ENCODE measurements at regions of chr14 and their contacts with region 1.

Region 1: DNA sequence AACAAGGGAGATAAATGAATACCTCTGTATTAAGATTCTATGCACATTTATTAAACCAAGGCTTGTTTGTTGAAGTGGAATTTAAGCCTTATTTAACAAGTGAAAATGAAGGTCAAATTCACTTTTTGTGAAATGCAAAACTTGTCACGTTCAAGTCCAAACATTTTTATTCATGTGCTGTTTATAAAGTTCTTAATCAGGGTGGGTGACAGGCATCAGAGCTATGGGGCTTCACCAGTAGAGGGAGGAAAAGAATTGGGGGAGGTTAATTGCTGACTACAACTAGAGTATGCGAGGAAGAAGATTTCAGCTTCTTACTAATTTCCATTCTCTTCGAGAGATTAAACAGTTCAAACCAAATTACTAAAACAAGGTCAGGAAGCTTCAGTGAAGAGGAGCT is 9.7 kb downstream of the MOK start:
- DNase-seq: no peak
- H3K4me3 ChIP-seq: no peak overlapping the region
- H3K27ac ChIP-seq: no peak overlapping the region
- H3K4me1 ChIP-seq: peaks cover 4% of the 10 kb centered on the region
- H3K27me3 ChIP-seq: no peaks in the 10 kb centered on the region
- CTCF ChIP-seq: peak; percentile 17 to 18

Region 2: DNA sequence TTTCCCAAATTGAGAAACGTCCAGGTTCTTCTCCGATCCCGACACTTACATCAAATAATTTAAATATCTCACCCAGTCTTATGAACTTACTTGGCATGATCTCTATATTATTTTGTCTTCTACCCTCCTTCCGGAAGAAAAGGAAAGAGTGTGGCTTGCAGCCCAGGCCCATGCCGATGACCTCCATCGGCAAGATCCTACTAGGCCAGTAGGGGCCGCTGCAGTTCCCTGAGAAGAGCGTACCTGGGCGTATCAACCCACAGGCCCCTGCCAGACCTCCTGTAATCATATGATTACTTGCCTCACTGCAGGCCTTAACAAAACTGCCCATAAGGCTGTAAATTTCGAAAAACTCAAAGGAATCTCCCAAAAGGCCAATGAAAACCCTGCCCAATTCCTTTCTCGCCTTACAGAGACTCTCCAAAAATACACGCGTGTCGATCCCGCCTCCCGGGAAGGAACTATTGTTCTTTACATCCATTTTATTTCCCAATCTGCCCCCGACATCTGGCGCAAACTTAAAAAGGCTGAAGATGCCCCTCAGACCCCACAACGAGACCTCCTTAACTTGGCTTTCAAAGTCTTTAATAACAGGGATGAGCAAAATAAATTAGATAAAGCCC is 59.9 kb before region 1 on chr14:
- CTCF ChIA-PET with region 1: no interaction called
- dilution Hi-C with region 1: no loop called
- in situ Hi-C with region 1: no loop called
- intact Hi-C with region 1: no loop called
- DNase-seq: peak; percentile 64
- H3K4me3 ChIP-seq: no peak overlapping the region
- H3K27ac ChIP-seq: no peak overlapping the region
- H3K4me1 ChIP-seq: peaks cover 9% of the 10 kb centered on the region
- H3K27me3 ChIP-seq: no peaks in the 10 kb centered on the region
- CTCF ChIP-seq: peak; percentile 69 to 93

Region 3: GRCh38 chr14:102509744-102510615 is 214.7 kb after region 1 on chr14 and contains the start of gene ANKRD9:
- CTCF ChIA-PET with region 1: no interaction called
- dilution Hi-C with region 1: loop called (anchors 10 kb)
- in situ Hi-C with region 1: no loop called
- intact Hi-C with region 1: no loop called
- DNase-seq: peak; percentile 93
- H3K4me3 ChIP-seq: peak within 1 kb of the TSS; percentile 52 to 70 (median 67)
- H3K27ac ChIP-seq: peak within 1 kb of the TSS; percentile 41
- H3K4me1 ChIP-seq: peaks cover 12% of the 10 kb centered on the region
- H3K27me3 ChIP-seq: no peaks in the 10 kb centered on the region
- CTCF ChIP-seq: no peak
- total RNA-seq, gene ANKRD9: 11.8 to 24.0 TPM